ENCODE measurements at regions of chr1 and their contacts with region 1.

Region 1: GRCh38 chr1:6438047-6438525 is 13.5 kb downstream of the ESPN start:
- DNase-seq: peak; percentile 83
- ATAC-seq: peak; percentile 62
- H3K4me3 Mint-ChIP-seq: no peak overlapping the region
- H3K27ac Mint-ChIP-seq: no peak overlapping the region
- H3K4me1 Mint-ChIP-seq: peaks cover 3% of the 10 kb centered on the region
- H3K27me3 Mint-ChIP-seq: peaks cover 34% of the 10 kb centered on the region

Region 2: GRCh38 chr1:6414443-6414844 is 23.6 kb before region 1 on chr1:
- CTCF ChIA-PET with region 1: interaction called, 102 read pairs
- DNase-seq: peak; percentile 65
- ATAC-seq: peak; percentile 85
- H3K4me3 Mint-ChIP-seq: no peak overlapping the region
- H3K27ac Mint-ChIP-seq: no peak overlapping the region
- H3K4me1 Mint-ChIP-seq: peaks cover 9% of the 10 kb centered on the region
- H3K27me3 Mint-ChIP-seq: peaks cover 64% of the 10 kb centered on the region

Region 3: GRCh38 chr1:6448749-6449631 is 10.9 kb after region 1 on chr1:
- CTCF ChIA-PET with region 1: interaction called, 26 read pairs
- DNase-seq: no peak
- ATAC-seq: no peak
- H3K4me3 Mint-ChIP-seq: no peak overlapping the region
- H3K27ac Mint-ChIP-seq: no peak overlapping the region
- H3K4me1 Mint-ChIP-seq: peaks cover 6% of the 10 kb centered on the region
- H3K27me3 Mint-ChIP-seq: peaks cover 65% of the 10 kb centered on the region

Region 4: DNA sequence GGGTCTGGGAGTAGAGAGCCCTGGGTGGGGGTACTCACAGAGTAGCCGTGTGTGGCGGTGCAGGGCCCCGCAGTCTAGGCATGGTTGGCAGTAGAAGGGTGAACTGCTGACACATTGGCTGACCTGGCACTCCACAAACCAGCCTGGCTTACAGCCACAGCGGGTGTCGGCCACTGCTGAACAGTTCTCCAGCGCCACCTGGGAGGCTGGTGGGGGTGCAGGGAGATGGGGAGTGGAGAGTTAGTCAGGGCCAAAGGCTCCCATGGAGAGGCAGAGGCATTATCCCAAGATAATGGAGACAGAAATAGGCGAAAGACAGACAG is 26.4 kb after region 1 on chr1:
- CTCF ChIA-PET with region 1: interaction called, 18 read pairs
- DNase-seq: no peak
- ATAC-seq: no peak
- H3K4me3 Mint-ChIP-seq: peak overlapping the region; percentile 79
- H3K27ac Mint-ChIP-seq: peak overlapping the region; percentile 78
- H3K4me1 Mint-ChIP-seq: peaks cover 40% of the 10 kb centered on the region
- H3K27me3 Mint-ChIP-seq: no peaks in the 10 kb centered on the region

Region 5: DNA sequence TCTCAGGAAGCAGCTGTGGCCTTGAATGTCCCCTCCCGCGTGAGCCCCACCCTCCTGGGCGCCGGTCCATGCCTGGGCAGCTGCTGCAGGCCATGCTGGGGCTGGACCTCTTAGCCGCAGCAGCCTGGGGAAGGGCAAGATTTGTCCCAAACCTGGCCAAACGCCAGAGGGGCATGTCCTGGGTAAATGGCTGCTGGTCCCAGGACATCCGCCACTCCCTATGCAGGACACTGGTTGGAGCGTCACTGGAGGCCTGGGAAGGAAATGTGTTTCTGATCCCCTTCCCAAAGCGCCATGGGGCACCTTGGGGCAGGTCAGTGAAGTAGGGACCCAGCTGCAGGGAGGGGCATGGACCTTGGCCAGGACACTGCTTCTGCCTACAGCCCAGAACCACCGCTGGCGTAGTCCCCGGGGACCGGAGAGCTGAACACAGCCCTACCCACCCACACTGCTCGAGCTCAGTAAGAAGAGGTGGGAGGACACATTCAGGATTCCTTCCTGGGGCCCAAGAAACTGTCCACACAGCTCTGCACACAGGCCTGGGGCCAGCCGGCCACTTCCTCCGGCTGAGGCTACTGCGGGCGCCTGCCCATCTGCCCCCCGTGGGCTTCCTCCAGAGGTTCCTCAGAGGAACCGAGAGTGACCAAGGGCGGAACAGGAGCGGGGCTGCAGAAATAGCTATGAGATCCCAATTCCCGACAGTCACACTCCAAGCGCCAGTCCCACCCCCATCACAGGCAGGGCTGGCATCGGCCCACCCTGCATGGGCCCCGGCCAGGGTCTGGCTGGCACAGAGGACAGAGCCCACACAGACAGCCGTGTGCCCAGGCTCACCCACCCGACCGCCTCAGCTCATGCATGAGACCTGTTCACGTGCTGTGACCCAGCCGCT is 64.2 kb after region 1 on chr1:
- CTCF ChIA-PET with region 1: no interaction called
- DNase-seq: no peak
- ATAC-seq: no peak
- H3K4me3 Mint-ChIP-seq: no peak overlapping the region
- H3K27ac Mint-ChIP-seq: no peak overlapping the region
- H3K4me1 Mint-ChIP-seq: peaks cover 1% of the 10 kb centered on the region
- H3K27me3 Mint-ChIP-seq: peaks cover 20% of the 10 kb centered on the region